ENCODE measurements at regions of chr17 and their contacts with region 1.

Region 1: GRCh38 chr17:82030470-82031302 is 792 bp upstream of the RAC3 start:
- DNase-seq: peak; percentile 92 to 93
- ATAC-seq: peak; percentile 62 to 88
- H3K4me3 ChIP-seq: peak overlapping the region; percentile 66
- H3K27ac ChIP-seq: peak overlapping the region; percentile 75 to 94
- H3K4me1 ChIP-seq: peaks cover 5% of the 10 kb centered on the region; the same call in 1 of the 3 replicates
- CTCF ChIP-seq: peak; percentile 54
- EP300 ChIP-seq: no peak
- POLR2A ChIP-seq: peak; percentile 31; the same call in 1 of the 2 replicates
- RAD21 ChIP-seq: peak; percentile 80 to 91

Region 2: GRCh38 chr17:81948635-81949378 is 81.9 kb before region 1 on chr17:
- CTCF ChIA-PET with region 1: interaction called, 22 read pairs
- POLR2A ChIA-PET with region 1: no interaction called
- DNase-seq: no peak
- ATAC-seq: peak in 1 of 2 experiments; percentile 41; a peak in 1 of 6 replicates
- H3K4me3 ChIP-seq: no peak overlapping the region
- H3K27ac ChIP-seq: no peak overlapping the region
- H3K4me1 ChIP-seq: no peaks in the 10 kb centered on the region
- CTCF ChIP-seq: no peak
- EP300 ChIP-seq: no peak
- POLR2A ChIP-seq: no peak
- RAD21 ChIP-seq: no peak

Region 3: DNA sequence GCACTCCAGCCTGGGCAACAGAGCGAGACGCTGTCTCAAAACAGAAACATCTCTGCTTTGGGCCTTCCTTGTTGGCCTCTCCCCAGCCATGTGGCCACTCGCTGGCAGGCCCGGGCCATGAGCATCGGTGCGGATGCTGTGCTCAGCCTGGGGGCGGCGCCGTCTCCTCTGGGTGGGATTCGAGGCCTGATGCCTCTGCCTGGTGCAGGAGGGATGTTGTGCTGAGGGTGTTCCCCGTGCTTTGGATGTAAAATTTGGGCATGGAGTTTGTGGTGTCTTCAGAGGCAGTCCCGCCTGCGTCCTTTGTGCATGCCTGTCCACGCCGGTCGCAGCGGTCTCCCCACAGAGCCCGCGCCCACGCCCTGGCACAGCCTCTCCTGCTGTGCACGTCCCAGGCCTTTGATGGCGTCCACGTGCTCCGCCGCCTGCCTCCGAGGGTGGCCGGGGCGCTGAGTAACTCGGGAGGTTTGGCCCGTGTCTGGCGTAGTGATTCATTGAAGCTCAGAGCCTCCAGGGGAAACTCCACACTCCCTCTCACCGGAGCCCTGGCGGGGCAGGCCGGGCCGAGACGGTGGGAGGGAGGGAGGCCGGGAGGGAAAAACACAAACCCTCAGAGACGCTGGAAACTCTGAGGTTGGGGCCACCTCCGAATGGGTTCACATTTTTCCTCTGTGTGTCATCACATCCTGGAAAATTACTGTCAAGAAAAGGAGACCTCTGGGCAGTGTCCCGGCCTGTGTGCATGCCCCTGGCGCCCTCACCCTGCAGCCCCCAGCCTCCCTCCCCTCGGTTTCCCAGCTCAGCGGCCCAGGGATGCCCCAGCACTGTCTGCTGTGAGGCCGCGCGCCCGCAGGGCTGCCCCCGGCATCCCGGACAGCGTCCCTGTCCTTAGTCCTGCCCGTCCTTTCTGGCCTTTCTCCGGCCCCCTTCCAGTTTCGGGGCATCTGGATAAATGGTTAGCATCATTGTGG is 27.0 kb before region 1 on chr17:
- CTCF ChIA-PET with region 1: interaction called, 16 read pairs
- POLR2A ChIA-PET with region 1: interaction called, 3 read pairs
- DNase-seq: peak; percentile 90 to 95
- ATAC-seq: peak; percentile 85 to 91
- H3K4me3 ChIP-seq: no peak overlapping the region
- H3K27ac ChIP-seq: peak overlapping the region; percentile 81 to 93
- H3K4me1 ChIP-seq: peaks cover 64% of the 10 kb centered on the region
- CTCF ChIP-seq: no peak
- EP300 ChIP-seq: 0 out of 5 replicates have a peak, but pooled peaks of 1 of the 2 experiments have one; percentile 38
- POLR2A ChIP-seq: no peak
- RAD21 ChIP-seq: peak in 1 of 2 experiments; percentile 39; a peak in 2 of 5 replicates

Region 4: DNA sequence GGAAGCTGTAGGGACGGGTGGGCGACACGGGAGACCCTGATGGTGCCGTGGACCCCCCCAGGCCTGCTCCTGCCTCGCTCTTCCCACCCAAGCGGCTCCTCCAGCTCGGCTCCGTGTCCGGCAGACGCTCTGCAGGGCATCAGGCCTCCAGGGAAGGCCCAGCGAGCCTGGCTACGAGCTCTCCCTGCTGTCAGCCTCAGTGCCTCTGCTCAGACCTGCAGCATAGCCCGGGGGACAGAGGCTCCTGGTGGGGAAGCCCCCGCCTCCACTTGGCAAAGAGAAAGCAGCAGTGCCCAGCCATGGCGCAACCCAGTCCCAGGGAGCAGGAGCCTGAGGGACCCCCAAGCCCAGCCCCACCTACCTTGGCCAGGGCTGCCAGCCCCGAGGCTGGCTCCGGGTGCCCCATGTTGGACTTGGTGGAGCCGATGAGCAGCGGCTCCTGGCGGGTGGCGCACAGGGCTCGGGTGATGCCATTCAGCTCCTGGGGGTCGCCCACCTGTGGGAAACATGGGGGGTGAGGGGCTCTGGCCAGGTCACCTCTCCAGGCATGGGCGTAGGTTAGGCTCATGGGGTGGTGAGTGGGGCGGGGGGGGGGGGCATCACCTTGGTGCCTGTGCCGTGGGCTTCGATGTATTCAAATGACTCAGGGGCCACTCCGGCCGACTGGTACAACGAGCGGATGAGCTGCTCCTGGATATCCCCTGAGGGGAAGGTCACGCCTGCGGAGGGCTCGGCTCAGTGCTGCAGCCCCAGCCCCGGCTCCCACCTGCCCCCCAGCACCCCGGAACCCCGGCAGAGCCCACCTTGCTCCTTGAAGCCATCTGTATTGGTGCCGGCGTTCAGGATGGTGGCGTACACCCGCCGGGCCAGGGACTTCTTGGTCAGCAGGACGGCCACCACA is 61.7 kb after region 1 on chr17:
- CTCF ChIA-PET with region 1: interaction called, 17 read pairs
- POLR2A ChIA-PET with region 1: interaction called, 33 read pairs
- DNase-seq: no peak
- ATAC-seq: no peak
- H3K4me3 ChIP-seq: no peak overlapping the region
- H3K27ac ChIP-seq: no peak overlapping the region
- H3K4me1 ChIP-seq: peaks cover 18% of the 10 kb centered on the region
- CTCF ChIP-seq: no peak
- EP300 ChIP-seq: no peak
- POLR2A ChIP-seq: no peak
- RAD21 ChIP-seq: no peak

Region 5: GRCh38 chr17:82118815-82119380 is 88.2 kb after region 1 on chr17:
- CTCF ChIA-PET with region 1: interaction called, 18 read pairs
- POLR2A ChIA-PET with region 1: no interaction called
- DNase-seq: no peak
- ATAC-seq: no peak
- H3K4me3 ChIP-seq: no peak overlapping the region
- H3K27ac ChIP-seq: no peak overlapping the region
- H3K4me1 ChIP-seq: no peaks in the 10 kb centered on the region
- CTCF ChIP-seq: no peak
- EP300 ChIP-seq: no peak
- POLR2A ChIP-seq: no peak
- RAD21 ChIP-seq: no peak

Region 6: DNA sequence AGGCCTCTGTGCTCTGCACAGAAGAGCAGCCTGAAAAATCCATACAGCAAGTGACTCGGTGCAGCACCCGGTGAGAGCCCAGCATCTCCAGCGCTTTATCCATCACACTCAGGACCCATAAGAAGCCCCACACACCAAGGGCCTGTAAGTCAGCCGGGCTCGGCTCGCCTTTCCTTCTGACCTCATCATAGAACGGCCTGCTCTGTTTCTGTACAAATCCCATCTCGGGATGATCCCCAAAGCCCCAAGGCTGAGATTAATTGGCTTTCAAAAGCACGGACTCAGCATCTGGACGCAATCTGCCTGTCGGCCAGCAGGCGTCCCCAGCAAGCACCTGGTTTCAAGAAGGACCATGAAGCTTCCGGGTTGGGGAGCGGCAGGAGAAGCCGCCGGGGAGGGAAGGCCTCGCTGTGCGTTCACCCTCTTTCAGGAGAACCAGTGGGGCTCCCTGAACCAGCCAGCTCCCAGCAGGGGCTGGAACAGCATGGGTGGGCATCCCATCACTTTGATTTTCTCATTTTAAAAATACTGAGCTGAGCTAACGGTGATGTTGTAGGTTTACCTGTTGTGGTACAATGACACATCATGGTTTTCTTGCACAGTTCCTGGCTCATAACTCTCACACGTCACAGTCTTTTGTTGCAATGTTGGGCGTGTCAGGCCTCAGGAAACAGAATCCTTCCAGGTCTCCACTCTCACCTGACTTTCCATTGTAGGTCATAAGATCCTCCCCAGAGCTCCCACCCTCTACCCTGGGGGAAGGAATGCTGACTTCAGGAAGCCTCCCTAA is 175.2 kb after region 1 on chr17:
- CTCF ChIA-PET with region 1: interaction called, 19 read pairs
- POLR2A ChIA-PET with region 1: interaction called, 5 read pairs
- DNase-seq: peak; percentile 91 to 94
- ATAC-seq: peak; percentile 91 to 94
- H3K4me3 ChIP-seq: no peak overlapping the region
- H3K27ac ChIP-seq: peak overlapping the region; percentile 84 to 86
- H3K4me1 ChIP-seq: peaks cover 24% of the 10 kb centered on the region
- CTCF ChIP-seq: peak; percentile 78
- EP300 ChIP-seq: no peak
- POLR2A ChIP-seq: peak; percentile 81
- RAD21 ChIP-seq: peak; percentile 72 to 75